A549 (cell line): ENCODE measurements at regions of chr14 and their contacts with region 1.

Region 1: DNA sequence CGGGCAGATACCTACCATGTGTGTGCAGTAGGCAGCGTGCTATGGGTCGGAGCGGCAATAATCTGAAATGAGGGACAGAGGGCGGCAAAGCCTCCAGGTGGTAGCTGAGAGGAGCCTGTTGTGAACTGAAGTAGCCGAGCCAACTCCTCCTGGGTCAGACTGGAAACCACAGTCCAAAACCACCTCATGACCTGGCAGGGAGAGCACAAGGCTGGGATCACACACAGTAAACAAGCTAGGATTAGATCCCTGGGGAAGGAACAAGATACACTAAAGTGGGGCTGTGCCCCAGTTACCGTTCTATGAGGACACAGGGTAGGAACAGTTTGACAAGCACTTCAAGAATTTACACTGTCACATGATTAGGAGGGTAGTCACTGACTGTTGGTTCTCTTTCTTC is 49.0 kb downstream of the AREL1 start:
- DNase-seq: no peak
- ATAC-seq: peak; percentile 22 to 28; a peak in 2 of 6 replicates
- H3K4me3 ChIP-seq: no peak overlapping the region
- H3K27ac ChIP-seq: no peak overlapping the region
- H3K4me1 ChIP-seq: peaks cover 17% of the 10 kb centered on the region
- CTCF ChIP-seq: no peak
- EP300 ChIP-seq: no peak
- POLR2A ChIP-seq: no peak
- RAD21 ChIP-seq: no peak

Region 2: GRCh38 chr14:74579447-74580274 is 84.2 kb before region 1 on chr14:
- CTCF ChIA-PET with region 1: no interaction called
- POLR2A ChIA-PET with region 1: interaction called, 10 read pairs
- DNase-seq: peak; percentile 89 to 94
- ATAC-seq: peak; percentile 63 to 79
- H3K4me3 ChIP-seq: no peak overlapping the region
- H3K27ac ChIP-seq: peak overlapping the region; percentile 83 to 95
- H3K4me1 ChIP-seq: peaks cover 81% of the 10 kb centered on the region
- CTCF ChIP-seq: no peak
- EP300 ChIP-seq: peak; percentile 58 to 83; a peak in 3 of 5 replicates
- POLR2A ChIP-seq: no peak
- RAD21 ChIP-seq: no peak; a peak in 1 of 5 replicates